Activated naive CD4-positive, alpha-beta T cell treated with anti-CD3 and anti-CD28 coated beads, Interleukin-2, amount 10 ng/mL, durations not matched to agents 7 days and 5 days (primary cell): ENCODE measurements at regions of chr9 and their contacts with region 1.

Region 1: DNA sequence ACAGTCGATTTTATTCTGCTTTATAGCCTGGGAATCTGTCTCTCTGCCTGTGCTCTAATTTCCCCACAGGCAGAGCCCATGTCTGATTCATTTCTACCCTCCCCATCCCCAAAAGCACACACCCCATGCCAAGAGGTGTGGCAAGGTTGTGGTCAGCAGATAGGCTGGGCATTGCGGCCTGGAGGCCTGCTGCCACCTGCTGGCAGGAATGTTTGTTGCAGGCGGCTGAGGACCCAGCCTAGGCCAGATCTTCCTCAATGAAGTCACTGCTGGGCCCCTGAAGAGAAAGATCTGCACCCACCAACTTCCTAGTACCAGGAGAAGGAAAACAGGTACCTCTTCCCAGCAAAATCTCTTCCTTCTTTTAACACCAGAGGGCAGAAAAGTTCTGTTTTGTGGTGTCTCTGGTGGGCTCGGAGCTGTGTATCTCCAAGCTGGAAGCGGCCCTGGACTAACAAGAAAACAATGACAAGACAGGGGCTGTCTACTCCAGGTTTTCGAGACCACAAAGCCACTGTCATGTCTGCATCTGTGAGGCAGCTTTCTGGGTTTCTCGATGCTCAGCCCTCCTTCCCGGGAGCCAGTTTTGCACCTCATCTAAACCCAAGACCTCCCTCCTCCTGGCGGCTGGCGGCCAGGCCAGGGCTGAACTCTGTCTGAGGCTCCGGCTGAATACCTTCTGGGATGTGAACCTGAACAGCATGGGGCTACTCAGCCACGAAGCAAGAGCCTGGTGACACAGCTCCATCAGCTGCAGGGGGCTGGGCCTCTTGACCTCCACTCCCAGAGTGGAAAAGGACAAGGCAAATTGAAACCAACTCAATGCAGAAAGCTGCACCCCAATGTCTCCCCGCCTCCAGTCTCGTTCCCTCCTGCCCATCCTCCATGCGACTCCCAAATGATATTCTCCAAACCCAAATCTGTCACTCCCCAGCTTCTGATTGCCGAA is 4.9 kb downstream of the ANKS6 start:
- DNase-seq: peak; percentile 68
- H3K4me3 Mint-ChIP-seq: no peak overlapping the region
- H3K27ac Mint-ChIP-seq: no peak overlapping the region
- H3K4me1 Mint-ChIP-seq: peaks cover 24% of the 10 kb centered on the region
- H3K27me3 Mint-ChIP-seq: peaks cover 3% of the 10 kb centered on the region

Region 2: DNA sequence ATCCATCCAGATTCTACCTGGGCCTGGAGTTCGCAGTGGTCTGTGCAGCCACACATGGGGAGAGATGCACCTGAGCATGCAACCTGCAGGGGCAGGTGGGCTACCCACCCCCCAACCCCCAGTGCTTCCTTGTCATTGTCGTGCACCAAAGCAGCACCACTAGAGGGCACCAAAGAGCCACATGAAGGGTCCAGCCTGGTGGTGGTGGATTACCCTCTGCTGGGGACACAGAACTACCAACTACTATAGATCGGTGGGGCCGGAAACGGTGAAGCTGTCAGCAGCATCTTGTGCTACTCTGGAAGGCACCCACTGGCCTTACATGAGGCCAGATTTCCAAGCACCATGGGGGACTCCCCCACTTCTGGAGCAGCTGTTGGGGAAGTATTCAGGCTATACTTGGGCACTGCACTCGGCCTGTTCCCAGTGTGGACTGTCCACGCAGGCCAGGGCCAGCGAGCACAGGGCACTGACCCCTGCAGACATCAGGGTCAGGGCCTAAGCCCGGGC is 475.8 kb before region 1 on chr9:
- CTCF ChIA-PET with region 1: interaction called, 10 read pairs
- DNase-seq: peak; percentile 89
- H3K4me3 Mint-ChIP-seq: no peak overlapping the region
- H3K27ac Mint-ChIP-seq: no peak overlapping the region
- H3K4me1 Mint-ChIP-seq: peaks cover 5% of the 10 kb centered on the region
- H3K27me3 Mint-ChIP-seq: peaks cover 22% of the 10 kb centered on the region

Region 3: DNA sequence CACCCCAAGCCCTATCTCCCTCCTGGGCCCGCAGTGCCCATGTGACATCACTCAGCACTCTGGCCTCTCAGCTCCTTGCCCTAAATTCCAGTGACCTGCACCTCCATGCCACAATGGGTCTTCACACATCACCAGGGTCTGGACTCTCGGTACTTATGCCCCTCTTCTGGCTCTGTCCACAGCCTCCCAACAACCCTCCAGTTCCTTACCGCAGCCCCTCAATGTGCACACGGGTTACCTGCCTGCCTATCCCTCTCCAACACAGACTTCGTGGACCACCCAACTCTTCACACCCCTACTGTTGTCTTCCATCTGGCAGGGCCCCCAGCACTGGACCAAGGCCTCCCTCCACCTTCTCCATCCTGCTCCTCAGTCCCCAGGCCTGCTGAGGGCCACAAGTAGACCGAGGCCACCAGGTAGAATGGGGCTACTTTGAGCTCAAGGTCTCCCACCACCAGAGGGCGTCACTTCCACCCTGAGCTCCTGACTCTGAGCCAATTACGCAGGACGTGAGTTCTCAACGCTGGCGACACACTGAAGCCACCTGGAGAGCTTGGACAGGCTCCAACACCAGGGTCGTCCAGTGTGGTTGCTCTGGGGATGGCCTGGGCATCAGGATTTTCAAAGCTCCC is 254.8 kb before region 1 on chr9:
- CTCF ChIA-PET with region 1: interaction called, 10 read pairs
- DNase-seq: peak; percentile 63
- H3K4me3 Mint-ChIP-seq: no peak overlapping the region
- H3K27ac Mint-ChIP-seq: no peak overlapping the region
- H3K4me1 Mint-ChIP-seq: no peaks in the 10 kb centered on the region
- H3K27me3 Mint-ChIP-seq: peaks cover 41% of the 10 kb centered on the region

Region 4: DNA sequence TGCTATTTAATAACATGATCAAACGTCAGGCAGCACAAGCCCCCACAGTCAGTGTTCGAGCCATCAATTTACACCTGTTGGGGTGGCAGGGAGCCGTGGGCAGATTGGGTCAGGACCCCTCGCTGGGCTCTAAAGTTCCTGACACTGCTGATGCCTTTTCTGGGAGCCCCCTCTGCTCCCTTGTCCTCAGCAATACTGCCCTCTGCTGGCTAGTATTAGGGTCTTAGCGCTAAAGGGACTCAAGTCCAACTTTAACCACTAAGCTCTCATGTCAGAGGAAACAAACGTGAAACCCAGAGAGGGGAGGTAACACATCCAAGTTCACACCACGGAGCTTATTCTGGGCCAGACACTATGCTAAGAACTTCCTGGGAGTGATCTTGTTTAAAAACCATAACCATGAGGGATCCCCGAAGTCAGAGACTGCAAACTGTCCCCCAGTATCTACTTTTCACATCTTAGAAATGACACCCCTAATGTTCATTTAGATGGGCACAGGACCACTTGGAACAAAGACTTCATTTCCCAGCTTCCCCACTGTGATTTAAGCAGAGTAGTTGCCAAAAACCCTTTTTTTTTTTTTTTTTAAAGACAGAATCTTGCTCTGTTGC is 15.5 kb before region 1 on chr9:
- CTCF ChIA-PET with region 1: interaction called, 22 read pairs
- DNase-seq: peak; percentile 54
- H3K4me3 Mint-ChIP-seq: no peak overlapping the region
- H3K27ac Mint-ChIP-seq: no peak overlapping the region
- H3K4me1 Mint-ChIP-seq: no peaks in the 10 kb centered on the region
- H3K27me3 Mint-ChIP-seq: no peaks in the 10 kb centered on the region

Region 5: DNA sequence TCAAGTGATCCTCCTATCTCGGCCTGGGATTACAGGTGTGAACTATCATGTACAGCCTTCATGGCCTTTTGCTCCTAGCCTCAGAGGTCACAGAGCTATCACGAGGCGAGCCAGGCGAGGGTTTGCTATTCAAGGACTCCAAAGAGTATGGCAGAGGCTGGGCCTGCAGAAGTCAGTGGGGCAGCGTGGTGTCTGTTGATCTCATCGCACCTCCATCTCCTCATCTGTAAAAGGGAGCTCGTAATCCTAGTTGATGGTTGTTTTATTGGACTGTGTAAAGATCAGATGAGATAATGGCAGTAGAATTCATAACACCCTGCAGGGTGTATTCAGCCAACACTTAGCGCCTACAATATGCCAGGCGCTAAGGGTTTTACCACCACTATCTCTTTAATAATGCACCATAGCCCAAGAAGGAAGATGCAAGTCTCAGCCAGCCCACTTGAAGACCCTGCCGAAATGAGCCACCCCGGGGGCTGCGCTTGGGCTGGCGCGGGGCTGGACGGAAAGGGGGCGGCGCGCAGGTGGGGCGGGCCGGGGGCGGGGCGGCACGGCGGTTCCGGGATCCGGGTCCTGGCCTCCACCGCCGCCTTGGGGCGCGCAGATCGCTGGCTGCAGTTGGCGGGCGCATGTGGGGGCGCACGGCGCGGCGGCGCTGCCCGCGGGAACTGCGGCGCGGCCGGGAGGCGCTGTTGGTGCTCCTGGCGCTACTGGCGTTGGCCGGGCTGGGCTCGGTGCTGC is 15.8 kb after region 1 on chr9 and contains the start of gene GALNT12:
- CTCF ChIA-PET with region 1: interaction called, 27 read pairs
- DNase-seq: peak; percentile 70
- H3K4me3 Mint-ChIP-seq: peak within 1 kb of the TSS; percentile 84
- H3K27ac Mint-ChIP-seq: peak within 1 kb of the TSS; percentile 67
- H3K4me1 Mint-ChIP-seq: peaks cover 24% of the 10 kb centered on the region
- H3K27me3 Mint-ChIP-seq: peaks cover 47% of the 10 kb centered on the region

Region 6: GRCh38 chr9:98848450-98849149 is 57.2 kb after region 1 on chr9:
- CTCF ChIA-PET with region 1: no interaction called
- DNase-seq: peak; percentile 84
- H3K4me3 Mint-ChIP-seq: no peak overlapping the region
- H3K27ac Mint-ChIP-seq: no peak overlapping the region
- H3K4me1 Mint-ChIP-seq: peaks cover 11% of the 10 kb centered on the region
- H3K27me3 Mint-ChIP-seq: peaks cover 3% of the 10 kb centered on the region